ENCODE measurements at regions of chr6 and their contacts with region 1.

Region 1: GRCh38 chr6:142885182-142885867 is 59.7 kb downstream of the HIVEP2 start:
- DNase-seq: peak; percentile 50
- H3K4me3 Mint-ChIP-seq: peak overlapping the region; percentile 93
- H3K27ac Mint-ChIP-seq: peak overlapping the region; percentile 97
- H3K4me1 Mint-ChIP-seq: peaks cover 89% of the 10 kb centered on the region
- H3K27me3 Mint-ChIP-seq: no peaks in the 10 kb centered on the region

Region 2: DNA sequence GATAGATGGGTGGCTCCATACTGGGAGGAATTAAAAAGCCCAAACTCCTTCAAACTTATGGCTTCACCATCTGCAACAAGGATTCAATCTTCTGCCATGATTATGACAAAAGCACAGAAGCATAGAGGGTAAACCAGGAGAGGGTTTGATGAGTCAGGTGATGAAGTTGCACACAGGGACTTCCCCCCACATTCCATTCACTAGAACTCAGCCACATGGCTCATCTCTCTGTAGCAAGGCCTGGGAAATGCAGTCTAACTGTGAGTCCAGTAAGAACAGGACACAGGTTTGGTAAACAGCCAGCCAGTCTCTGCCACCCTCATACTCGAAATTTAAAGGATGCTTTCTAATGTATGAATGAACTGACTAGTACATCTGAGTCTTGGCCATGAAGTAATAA is 83.2 kb before region 1 on chr6:
- CTCF ChIA-PET with region 1: interaction called, 3 read pairs
- POLR2A ChIA-PET with region 1: interaction called, 6 read pairs
- intact Hi-C with region 1: loop called (anchors 1 kb)
- DNase-seq: peak; percentile 77
- H3K4me3 Mint-ChIP-seq: no peak overlapping the region
- H3K27ac Mint-ChIP-seq: peak overlapping the region; percentile 79
- H3K4me1 Mint-ChIP-seq: peaks cover 95% of the 10 kb centered on the region
- H3K27me3 Mint-ChIP-seq: no peaks in the 10 kb centered on the region

Region 3: DNA sequence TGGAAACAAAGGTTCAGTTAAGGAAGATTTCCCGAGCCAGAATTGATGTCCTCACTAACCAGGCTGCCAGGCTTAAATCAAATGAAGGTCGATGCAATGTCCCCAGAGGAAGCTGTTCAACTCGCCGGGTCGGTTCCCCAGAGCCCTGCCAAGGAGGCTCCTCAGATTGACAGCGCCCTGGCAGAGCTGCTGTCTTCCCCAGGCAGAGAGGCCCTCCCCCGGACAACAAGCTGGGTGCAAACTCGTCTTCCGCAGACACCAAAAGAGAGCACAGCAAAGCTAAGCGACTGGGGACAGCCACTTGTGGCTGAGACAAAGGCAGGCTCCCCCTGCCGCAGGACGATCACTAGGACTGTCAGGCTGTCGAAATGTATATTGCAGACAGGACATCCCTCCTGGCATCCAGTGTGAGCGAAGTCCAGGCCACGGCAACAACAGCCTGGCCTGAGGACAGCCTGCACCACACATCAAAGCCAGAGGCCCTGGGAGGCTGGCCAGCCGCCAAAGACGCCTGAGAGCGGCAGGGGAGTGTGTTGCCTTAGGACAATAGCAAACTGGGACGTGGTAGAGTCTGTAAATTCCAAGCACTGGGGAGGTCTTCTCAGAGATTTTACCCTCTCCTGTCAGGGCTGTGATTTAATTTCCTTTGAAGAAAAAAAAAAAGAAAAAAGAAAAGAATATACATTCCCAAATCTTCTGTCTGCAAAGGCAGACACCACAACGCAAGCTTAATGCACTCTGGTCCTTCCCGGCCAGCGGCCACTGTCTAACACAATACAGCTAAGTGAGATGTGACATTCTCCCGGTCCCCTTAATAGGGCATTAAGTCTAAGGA is 39.5 kb before region 1 on chr6:
- CTCF ChIA-PET with region 1: interaction called, 3 read pairs
- POLR2A ChIA-PET with region 1: interaction called, 11 read pairs
- intact Hi-C with region 1: loop called (anchors 1 kb)
- DNase-seq: peak; percentile 65
- H3K4me3 Mint-ChIP-seq: peak overlapping the region; percentile 72
- H3K27ac Mint-ChIP-seq: peak overlapping the region; percentile 88
- H3K4me1 Mint-ChIP-seq: peaks cover 96% of the 10 kb centered on the region
- H3K27me3 Mint-ChIP-seq: no peaks in the 10 kb centered on the region

Region 4: DNA sequence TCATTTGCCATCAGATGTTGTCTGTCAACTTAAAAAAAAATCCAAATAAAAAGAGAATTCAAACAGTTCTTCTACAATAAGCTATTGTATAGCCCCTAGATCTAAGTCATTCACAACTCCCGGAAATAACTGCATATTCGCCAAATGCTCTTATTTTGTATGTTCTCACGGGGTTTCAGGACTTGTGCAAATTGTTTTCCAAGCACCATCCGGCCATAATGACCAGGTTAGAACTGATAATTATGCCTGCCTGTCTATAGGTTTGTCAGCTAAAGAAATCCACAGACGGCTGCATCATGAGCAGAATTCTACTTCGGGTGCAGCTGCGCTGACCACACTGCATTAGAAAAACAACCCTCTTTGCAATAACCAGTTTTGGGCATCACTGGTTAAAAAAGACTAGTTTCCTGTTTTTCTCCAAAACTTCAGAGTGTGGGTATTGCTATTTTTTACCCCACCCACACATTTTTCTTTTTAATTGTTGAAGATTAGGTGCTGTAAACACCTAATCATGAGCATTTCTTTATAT is 28.0 kb before region 1 on chr6:
- CTCF ChIA-PET with region 1: interaction called, 10 read pairs
- POLR2A ChIA-PET with region 1: interaction called, 4 read pairs
- intact Hi-C with region 1: loop called (anchors 1 kb)
- DNase-seq: no peak
- H3K4me3 Mint-ChIP-seq: peak overlapping the region; percentile 66
- H3K27ac Mint-ChIP-seq: peak overlapping the region; percentile 92
- H3K4me1 Mint-ChIP-seq: peaks cover 92% of the 10 kb centered on the region
- H3K27me3 Mint-ChIP-seq: no peaks in the 10 kb centered on the region

Region 5: DNA sequence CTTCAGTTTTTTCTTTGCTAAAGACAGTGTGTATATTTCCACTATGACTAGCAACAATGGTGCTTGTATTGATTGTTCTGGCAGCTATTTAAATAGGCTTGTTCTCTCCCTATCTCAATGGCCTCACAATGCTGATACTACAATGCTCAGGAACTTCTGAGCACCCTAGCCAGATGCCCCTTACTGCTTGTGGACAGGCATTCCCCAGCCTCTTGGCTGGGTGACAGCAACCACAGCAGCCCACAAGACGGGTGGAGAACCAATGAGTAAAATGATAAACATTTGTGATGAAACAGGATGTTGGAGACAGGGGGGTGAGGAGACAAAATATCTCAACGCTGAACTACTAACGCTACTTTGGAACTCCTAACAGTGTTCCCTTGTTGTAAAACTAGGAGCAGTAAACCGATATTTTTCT is 17.3 kb after region 1 on chr6:
- CTCF ChIA-PET with region 1: interaction called, 9 read pairs
- POLR2A ChIA-PET with region 1: interaction called, 4 read pairs
- intact Hi-C with region 1: loop called (anchors 1 kb)
- DNase-seq: peak; percentile 87
- H3K4me3 Mint-ChIP-seq: peak overlapping the region; percentile 56
- H3K27ac Mint-ChIP-seq: peak overlapping the region; percentile 87
- H3K4me1 Mint-ChIP-seq: peaks cover 59% of the 10 kb centered on the region
- H3K27me3 Mint-ChIP-seq: no peaks in the 10 kb centered on the region

Region 6: GRCh38 chr6:142926494-142927270 is 41.4 kb after region 1 on chr6:
- CTCF ChIA-PET with region 1: interaction called, 5 read pairs
- POLR2A ChIA-PET with region 1: interaction called, 8 read pairs
- intact Hi-C with region 1: loop called (anchors 5 kb)
- DNase-seq: peak; percentile 83
- H3K4me3 Mint-ChIP-seq: peak overlapping the region; percentile 83
- H3K27ac Mint-ChIP-seq: peak overlapping the region; percentile 91
- H3K4me1 Mint-ChIP-seq: peaks cover 55% of the 10 kb centered on the region
- H3K27me3 Mint-ChIP-seq: no peaks in the 10 kb centered on the region

Region 7: GRCh38 chr6:143400258-143401067 is 515.1 kb after region 1 on chr6:
- CTCF ChIA-PET with region 1: no interaction called
- POLR2A ChIA-PET with region 1: no interaction called
- intact Hi-C with region 1: no loop called
- DNase-seq: no peak
- H3K4me3 Mint-ChIP-seq: no peak overlapping the region
- H3K27ac Mint-ChIP-seq: no peak overlapping the region
- H3K4me1 Mint-ChIP-seq: peaks cover 24% of the 10 kb centered on the region
- H3K27me3 Mint-ChIP-seq: no peaks in the 10 kb centered on the region

Measured in activated CD4-positive, alpha-beta memory T cell treated with anti-CD3 and anti-CD28 coated beads for 36 hours (primary cell).